ENCODE measurements at regions of chr6 and their contacts with region 1.

Region 1: DNA sequence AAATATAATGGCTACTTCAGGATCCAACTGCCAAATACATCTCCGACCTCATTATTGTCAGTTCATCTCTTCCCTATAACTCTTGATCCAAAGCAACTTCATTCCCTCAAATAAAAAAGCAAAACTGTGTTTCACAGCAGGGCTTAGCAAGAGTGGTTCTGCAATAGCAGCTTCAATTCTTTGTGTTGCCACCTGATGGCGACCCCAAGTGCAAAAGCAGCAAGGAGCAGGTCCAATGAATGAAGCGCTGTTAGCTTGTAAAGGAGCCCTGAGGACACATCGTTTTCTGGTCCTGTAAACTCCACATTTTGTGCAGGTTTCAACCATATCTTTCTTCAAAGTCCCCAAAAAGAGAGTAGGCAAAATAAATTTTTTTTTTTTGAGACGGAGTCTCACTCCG is 19.6 kb downstream of the RTN4IP1 start:
- DNase-seq: no peak
- H3K4me3 ChIP-seq: no peak overlapping the region
- CTCF ChIP-seq: no peak
- POLR2A ChIP-seq: no peak

Region 2: DNA sequence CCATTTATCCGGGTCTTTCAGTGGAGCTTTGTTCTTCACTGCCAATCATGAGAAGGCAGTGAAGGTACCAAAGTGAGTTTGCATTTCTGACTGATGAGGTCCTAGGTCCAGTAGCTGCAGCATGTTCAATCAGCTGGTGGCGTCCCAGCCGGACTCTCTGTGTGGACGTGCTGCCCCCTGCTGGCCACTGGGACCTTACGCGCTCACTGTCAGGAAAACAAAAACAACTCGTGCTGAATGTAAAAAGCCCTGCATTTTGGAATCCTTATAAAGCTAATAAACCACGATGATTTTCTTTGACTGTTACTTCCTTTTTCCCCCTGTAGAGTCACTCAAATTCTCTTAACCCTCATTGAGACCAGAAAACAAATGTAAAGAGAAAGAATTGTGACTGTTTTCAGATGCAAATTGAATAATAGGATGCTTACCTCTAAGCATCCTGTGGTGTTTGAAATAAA is 369.8 kb after region 1 on chr6:
- intact Hi-C with region 1: loop called (anchors 10 kb)
- DNase-seq: peak; percentile 77 to 97
- H3K4me3 ChIP-seq: no peak overlapping the region
- CTCF ChIP-seq: peak in 1 of 3 donors; percentile 80
- POLR2A ChIP-seq: no peak

Measured in lower leg skin (tissue), 4 donors.